B cell (primary cell): ENCODE measurements at regions of chr1 and their contacts with region 1.

Region 1: GRCh38 chr1:173798078-173798477 is 26.4 kb upstream of the DARS2 start:
- DNase-seq: no peak
- ATAC-seq: no peak
- H3K4me3 ChIP-seq: no peak overlapping the region
- H3K4me3 Mint-ChIP-seq: no peak overlapping the region
- H3K27ac ChIP-seq: no peak overlapping the region
- H3K27ac Mint-ChIP-seq: no peak overlapping the region
- H3K4me1 ChIP-seq: no peaks in the 10 kb centered on the region
- H3K4me1 Mint-ChIP-seq: no peaks in the 10 kb centered on the region
- H3K27me3 ChIP-seq: no peaks in the 10 kb centered on the region
- H3K27me3 Mint-ChIP-seq: no peaks in the 10 kb centered on the region
- CTCF ChIP-seq: no peak

Region 2: DNA sequence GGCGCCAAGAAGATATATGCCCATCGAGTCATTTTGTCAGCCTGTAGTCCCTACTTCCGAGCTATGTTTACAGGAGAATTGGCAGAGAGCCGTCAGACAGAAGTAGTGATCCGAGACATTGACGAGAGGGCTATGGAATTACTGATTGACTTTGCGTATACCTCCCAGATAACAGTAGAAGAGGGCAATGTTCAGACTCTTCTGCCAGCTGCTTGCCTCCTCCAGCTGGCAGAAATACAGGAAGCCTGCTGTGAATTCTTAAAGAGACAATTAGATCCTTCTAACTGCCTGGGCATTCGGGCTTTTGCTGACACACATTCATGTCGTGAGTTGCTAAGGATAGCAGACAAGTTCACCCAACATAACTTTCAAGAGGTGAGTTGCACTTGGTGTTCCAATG is 64.2 kb before region 1 on chr1:
- CTCF ChIA-PET with region 1: no interaction called
- POLR2A ChIA-PET with region 1: no interaction called
- intact Hi-C with region 1: no loop called
- DNase-seq: no peak
- ATAC-seq: no peak
- H3K4me3 ChIP-seq: no peak overlapping the region
- H3K4me3 Mint-ChIP-seq: no peak overlapping the region
- H3K27ac ChIP-seq: no peak overlapping the region
- H3K27ac Mint-ChIP-seq: no peak overlapping the region
- H3K4me1 ChIP-seq: no peaks in the 10 kb centered on the region
- H3K4me1 Mint-ChIP-seq: peaks cover 20% of the 10 kb centered on the region
- H3K27me3 ChIP-seq: no peaks in the 10 kb centered on the region
- H3K27me3 Mint-ChIP-seq: no peaks in the 10 kb centered on the region
- CTCF ChIP-seq: no peak

Region 3: GRCh38 chr1:173749137-173749536 is 48.9 kb before region 1 on chr1:
- CTCF ChIA-PET with region 1: no interaction called
- POLR2A ChIA-PET with region 1: no interaction called
- intact Hi-C with region 1: loop called (anchors 10 kb)
- DNase-seq: no peak
- ATAC-seq: no peak
- H3K4me3 ChIP-seq: no peak overlapping the region
- H3K4me3 Mint-ChIP-seq: no peak overlapping the region
- H3K27ac ChIP-seq: no peak overlapping the region
- H3K27ac Mint-ChIP-seq: no peak overlapping the region
- H3K4me1 ChIP-seq: no peaks in the 10 kb centered on the region
- H3K4me1 Mint-ChIP-seq: no peaks in the 10 kb centered on the region
- H3K27me3 ChIP-seq: no peaks in the 10 kb centered on the region
- H3K27me3 Mint-ChIP-seq: no peaks in the 10 kb centered on the region
- CTCF ChIP-seq: no peak